Left colon (tissue), 2 donors: ENCODE measurements at regions of chr16 and their contacts with region 1.

Region 1: DNA sequence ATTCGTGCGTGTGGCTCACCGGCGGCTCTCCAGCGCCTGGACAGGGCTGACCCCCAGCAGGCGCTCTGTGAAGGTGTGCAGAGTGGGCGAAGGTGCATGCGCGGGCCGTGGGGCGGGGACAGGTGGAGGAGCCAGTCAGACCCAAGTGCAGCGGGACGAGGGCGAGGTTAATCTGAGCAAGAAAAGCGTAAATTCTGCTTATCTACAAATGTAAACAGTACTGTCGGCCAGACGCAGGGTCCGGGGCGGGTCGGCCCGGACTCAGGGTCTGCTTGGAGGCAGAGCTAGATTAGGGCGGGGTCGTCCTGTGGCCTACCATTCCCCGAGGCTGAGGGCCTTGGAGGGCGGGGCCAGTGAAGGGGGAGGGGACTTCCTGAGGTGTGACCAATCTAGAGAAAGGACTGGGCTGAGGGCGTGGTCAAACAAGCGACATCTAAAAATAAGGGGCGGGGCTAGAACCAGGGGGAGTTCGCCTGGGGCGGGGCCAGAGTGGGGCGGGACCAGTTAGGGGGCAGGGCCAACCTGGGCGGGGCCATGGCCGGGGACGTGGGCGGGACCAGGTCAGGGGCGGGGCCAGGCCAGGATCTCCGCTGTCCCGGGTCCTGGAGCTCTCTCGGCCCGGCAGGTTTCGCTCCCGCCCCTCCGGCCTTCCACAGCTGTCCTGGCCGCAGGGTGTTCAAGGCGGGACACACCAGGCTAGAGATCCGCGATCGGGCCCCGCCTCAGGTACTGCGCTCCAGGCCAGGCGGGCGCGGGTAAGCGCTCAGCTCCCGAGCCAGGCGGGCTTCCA is at the start of gene SEC14L5:
- DNase-seq: peak; percentile 99 to 100
- ATAC-seq: peak; percentile 86
- total RNA-seq, gene SEC14L5: 1.4 to 1.8 TPM

Region 2: DNA sequence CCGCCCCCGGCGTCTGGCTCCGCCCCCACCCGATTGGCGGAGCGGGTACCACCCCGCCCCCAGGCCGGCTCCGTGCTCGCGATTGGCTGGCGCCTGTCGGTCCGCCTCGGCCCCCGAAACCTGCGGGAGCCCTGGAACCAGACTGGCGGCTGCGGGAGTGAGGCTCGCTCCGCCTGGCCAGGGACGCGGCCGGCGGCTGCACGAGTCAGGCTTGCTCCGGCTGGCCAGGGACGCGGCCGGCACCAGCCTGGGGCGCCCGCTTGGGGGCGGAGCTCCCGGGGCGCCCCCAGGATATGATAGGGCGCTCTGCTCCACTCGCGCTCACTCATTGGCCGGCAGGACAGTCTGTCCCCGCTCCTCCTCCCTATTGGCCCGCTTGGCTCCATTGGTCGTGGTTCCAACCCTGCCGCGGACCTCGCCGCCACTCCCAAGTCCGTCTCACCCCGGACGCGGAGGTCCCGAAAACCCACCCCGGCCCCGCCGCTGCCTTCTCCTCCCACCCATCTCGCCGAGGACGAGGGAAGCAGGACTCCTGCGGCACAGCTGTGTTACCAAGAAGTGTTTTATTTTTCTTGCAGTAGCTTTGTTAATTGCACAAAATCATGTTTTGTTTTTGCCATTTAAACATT is 155.1 kb before region 1 on chr16:
- intact Hi-C with region 1: no loop called
- DNase-seq: peak; percentile 94 to 95
- ATAC-seq: peak; percentile 70

Region 3: DNA sequence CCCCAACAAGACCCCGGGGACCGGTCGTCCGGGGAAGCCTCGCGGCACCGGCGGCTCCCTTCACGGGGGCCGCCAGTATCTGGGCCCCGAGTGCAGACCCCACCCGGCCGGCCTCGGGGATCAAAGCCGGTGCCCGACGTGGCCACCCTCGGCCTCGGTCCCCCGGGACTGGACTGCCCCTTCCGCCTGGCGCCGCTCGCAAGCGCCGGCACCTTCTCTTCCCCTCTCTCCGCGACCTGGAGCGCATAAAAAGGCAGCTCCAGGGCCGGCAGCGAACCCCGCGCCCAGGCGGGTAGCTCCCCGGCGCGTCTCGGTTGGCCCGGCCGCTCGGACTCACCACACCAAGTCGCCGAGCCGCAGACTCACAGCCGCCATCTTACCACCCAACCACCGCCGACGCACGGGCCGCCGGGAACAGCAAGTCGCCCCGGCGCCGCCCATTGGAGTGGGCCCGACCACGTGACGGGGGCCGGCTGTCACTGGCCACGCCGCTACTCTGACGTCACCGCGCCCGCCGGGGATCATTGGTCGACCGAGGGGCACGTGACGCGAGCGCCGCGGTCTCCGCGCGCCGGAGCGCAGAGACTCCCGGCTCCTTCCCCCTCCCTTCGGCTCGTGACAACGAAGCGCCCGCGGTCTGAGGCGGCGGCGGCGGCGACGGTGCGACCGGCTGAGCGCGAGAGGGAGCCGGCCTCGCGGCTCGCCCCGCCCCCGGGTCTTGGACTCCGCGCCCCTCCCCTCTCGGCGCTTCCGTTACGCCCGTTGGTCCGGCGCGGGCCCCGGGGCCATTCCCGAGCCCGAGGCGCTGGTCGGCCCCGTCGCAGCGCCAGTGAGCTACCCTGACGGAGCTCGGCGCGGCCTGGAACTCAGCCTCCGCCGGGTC is 110.8 kb before region 1 on chr16 and contains the starts of genes GLYR1 and UBN1:
- intact Hi-C with region 1: loop called in 1 of 2 experiments (anchors 5 kb)
- DNase-seq: peak; percentile 99 to 100
- ATAC-seq: peak; percentile 89
- total RNA-seq, gene GLYR1: 106 to 114 TPM
- total RNA-seq, gene UBN1: 34.8 to 43.5 TPM

Region 4: GRCh38 chr16:4859900-4860255 is 98.0 kb before region 1 on chr16:
- intact Hi-C with region 1: no loop called
- DNase-seq: no peak
- ATAC-seq: no peak

Region 5: DNA sequence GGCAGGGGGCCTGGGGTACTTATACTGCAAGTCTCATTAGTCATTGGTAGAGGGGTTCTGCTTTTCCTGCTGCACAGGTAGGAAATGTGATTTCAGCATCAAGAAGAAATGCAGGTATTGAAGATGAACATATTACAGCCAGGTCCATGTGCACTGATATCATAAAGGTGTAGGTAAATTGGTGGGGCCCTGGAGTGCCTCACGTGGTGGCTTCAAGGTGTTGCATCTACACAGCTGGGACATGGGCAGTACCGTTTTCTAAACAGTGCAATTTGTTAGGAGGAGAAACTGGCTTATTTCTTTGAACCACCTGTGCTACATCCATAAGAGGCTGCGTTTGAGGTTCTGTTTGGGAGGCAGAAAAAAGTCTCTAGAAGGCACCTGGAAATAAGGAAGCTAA is 1756.6 kb after region 1 on chr16:
- intact Hi-C with region 1: no loop called
- DNase-seq: no peak
- ATAC-seq: no peak